ENCODE measurements at regions of chr1 and their contacts with region 1.

Region 1: GRCh38 chr1:5637171-5637570 is 355.1 kb downstream of the NPHP4 start:
- DNase-seq: peak in 2 of 4 experiments; percentile 28 to 31
- ATAC-seq: no peak
- H3K4me3 ChIP-seq: no peak overlapping the region
- H3K27ac ChIP-seq: no peak overlapping the region
- H3K4me1 ChIP-seq: no peaks in the 10 kb centered on the region
- H3K27me3 ChIP-seq: peaks cover 0 to 9% of the 10 kb centered on the region in 2 experiments; a peak in 1 of 5 replicates
- CTCF ChIP-seq: peak; percentile 50 to 52 (median 51); a peak in 5 of 6 replicates
- EP300 ChIP-seq: no peak
- POLR2A ChIP-seq: no peak
- RAD21 ChIP-seq: peak in 1 of 2 experiments; percentile 55; a peak in 2 of 4 replicates

Region 2: GRCh38 chr1:5745776-5746610 is 108.8 kb after region 1 on chr1:
- CTCF ChIA-PET with region 1: interaction called, 5 read pairs
- POLR2A ChIA-PET with region 1: no interaction called
- in situ Hi-C with region 1: no loop called
- intact Hi-C with region 1: loop called (anchors 5 kb)
- DNase-seq: peak; percentile 81 to 93 (median 92)
- ATAC-seq: peak; percentile 98
- H3K4me3 ChIP-seq: no peak overlapping the region
- H3K27ac ChIP-seq: no peak overlapping the region
- H3K4me1 ChIP-seq: peaks cover 0 to 17% of the 10 kb centered on the region in 2 experiments; a peak in 1 of 5 replicates
- H3K27me3 ChIP-seq: peaks cover 5 to 46% of the 10 kb centered on the region in 2 experiments; a peak in 3 of 5 replicates
- CTCF ChIP-seq: peak; percentile 97 to 98 (median 98)
- EP300 ChIP-seq: no peak
- POLR2A ChIP-seq: no peak
- RAD21 ChIP-seq: peak; percentile 74 to 94